ENCODE measurements at regions of chr10 and their contacts with region 1.

Region 1: DNA sequence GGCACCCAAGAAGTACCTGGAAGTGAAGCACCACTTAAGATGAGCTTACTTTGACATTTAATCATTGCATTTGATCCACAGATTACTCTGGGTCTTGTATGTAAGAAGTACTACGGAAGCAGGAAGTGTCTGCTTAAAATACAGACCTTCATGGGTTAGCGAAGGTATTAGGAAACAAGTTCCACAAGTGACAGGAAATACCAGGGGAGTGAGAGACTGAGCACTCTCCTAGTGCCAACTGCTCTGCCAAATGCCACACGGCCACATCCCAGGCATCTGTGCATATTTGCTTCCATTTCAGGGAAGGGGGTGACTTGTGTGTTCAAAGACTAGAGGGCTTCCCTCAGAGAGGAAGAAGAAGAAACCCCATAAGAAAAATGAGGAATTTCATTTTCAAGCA is 57.2 kb upstream of the ANK3 start:
- DNase-seq: no peak
- ATAC-seq: peak; percentile 78 to 88

Region 2: GRCh38 chr10:60267802-60268201 is 179.0 kb before region 1 on chr10:
- intact Hi-C with region 1: no loop called
- DNase-seq: no peak
- ATAC-seq: peak; percentile 60 to 68

Region 3: GRCh38 chr10:60646966-60647796 is 200.3 kb after region 1 on chr10:
- intact Hi-C with region 1: loop called in 1 of 2 experiments (anchors 2 kb)
- DNase-seq: no peak
- ATAC-seq: peak in 1 of 2 donors; percentile 49

Measured in left cardiac atrium (tissue), 4 donors.